A673 (cell line): ENCODE measurements at regions of chr3 and their contacts with region 1.

Region 1: DNA sequence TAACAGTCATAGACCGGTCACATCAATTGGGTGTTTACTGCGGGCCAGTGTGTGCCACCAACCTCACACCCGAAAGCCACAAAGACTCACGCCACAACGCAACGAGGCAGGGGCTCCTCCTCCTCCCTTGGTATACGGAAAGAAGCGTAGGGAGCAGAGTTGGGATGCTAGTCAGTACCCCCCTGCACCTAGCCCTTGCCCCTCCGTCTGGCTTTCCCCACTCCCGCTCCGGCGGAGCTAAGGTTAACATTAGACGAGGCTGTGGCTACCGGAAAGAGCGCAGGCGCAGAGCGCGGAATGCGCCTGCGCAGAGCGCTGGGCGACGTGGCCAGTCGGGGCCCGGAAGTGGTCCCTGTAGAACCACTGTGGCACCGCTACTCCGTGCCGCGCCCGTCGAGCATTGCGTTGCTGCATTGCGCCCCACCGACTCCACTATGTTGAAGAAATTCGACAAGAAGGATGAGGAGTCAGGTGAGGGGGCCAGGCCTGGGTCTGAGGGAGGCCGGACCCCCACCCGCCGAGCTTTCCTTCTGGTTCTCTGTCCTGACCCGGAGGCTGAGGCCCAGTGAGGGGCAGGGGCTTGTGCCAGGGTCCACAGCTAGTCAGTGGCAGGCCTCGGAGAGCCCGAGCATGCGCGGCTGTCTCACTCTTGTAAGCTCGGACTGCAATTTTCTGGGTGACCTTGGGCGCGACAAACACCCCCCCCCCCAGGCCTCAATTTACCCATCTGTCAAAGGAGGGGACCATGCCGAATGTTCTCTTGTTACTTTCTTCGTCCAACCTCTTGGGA is at the start of gene COPG1:
- DNase-seq: peak; percentile 92
- H3K4me3 ChIP-seq: peak within 1 kb of the TSS; percentile 93
- H3K27ac ChIP-seq: peak within 1 kb of the TSS; percentile 91
- H3K4me1 ChIP-seq: no peaks in the 10 kb centered on the region
- H3K27me3 ChIP-seq: no peaks in the 10 kb centered on the region
- CTCF ChIP-seq: no peak
- total RNA-seq, gene COPG1: 157 and 158 TPM in 2 replicates

Region 2: DNA sequence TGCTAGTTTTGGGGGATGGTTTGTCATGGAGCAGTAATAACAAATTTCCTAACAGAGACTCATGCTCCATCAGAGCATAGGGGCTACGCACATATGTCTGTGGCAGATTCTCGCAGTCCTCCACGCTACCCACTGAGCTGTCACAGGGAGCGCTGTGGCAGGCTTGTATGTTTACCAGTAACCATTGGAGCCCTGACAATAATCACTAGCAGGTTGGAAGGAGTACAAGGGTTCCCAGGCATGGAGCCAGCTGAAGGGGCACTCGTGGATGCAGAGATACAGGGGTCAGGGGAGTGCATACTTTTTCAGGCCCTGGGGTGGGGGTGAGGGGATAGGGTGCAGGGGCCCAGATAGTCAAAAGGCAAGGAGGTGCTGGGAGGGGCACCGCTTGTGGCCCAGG is 196.8 kb before region 1 on chr3:
- CTCF ChIA-PET with region 1: interaction called, 20 read pairs
- POLR2A ChIA-PET with region 1: interaction called, 3 read pairs
- intact Hi-C with region 1: loop called (anchors 1 kb)
- DNase-seq: no peak
- H3K4me3 ChIP-seq: no peak overlapping the region
- H3K27ac ChIP-seq: no peak overlapping the region
- H3K4me1 ChIP-seq: no peaks in the 10 kb centered on the region
- H3K27me3 ChIP-seq: no peaks in the 10 kb centered on the region
- CTCF ChIP-seq: no peak

Region 3: DNA sequence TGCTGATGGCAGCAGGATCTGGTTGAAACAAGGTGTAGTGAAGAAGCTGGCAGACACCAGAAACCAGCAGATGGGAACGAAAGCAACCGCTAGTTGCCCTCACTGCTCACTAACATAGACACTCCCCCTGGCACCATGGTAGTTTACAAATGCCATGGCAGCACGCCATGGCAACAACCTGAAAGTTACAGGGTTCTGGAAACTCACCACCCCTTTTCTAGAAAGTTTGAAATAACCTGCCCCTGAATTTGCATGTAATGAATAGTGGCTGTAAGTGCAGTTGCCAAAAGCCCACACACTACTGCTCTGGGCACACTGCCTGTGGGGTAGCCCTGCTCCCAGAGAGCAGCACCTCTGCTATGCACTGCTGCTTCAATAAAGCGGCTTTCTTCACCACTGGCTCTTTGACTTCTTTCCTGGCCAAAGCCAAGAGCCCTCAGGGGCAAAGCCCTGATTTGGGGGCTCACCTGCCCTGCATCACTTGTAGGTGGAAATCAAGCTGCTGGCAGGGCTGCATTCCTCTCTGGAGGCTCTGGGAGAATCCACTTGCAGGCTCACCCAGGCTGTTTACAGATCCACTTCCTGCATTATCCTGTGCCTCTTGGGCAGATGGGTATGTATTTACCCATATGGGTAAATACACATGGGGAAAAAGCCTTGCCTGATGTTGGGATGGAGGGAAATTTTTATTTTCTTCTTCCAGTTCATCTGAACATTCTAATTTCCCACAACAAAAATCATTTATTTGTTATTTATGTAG is 190.8 kb before region 1 on chr3:
- CTCF ChIA-PET with region 1: interaction called, 20 read pairs
- POLR2A ChIA-PET with region 1: interaction called, 3 read pairs
- intact Hi-C with region 1: loop called (anchors 1 kb)
- DNase-seq: no peak
- H3K4me3 ChIP-seq: no peak overlapping the region
- H3K27ac ChIP-seq: no peak overlapping the region
- H3K4me1 ChIP-seq: no peaks in the 10 kb centered on the region
- H3K27me3 ChIP-seq: no peaks in the 10 kb centered on the region
- CTCF ChIP-seq: no peak

Region 4: GRCh38 chr3:129183569-129184395 is 65.7 kb before region 1 on chr3 and contains the start of gene CNBP:
- CTCF ChIA-PET with region 1: no interaction called
- POLR2A ChIA-PET with region 1: interaction called, 3 read pairs
- intact Hi-C with region 1: loop called (anchors 5 kb)
- DNase-seq: peak; percentile 98
- H3K4me3 ChIP-seq: peak within 1 kb of the TSS; percentile 64
- H3K27ac ChIP-seq: peak within 1 kb of the TSS; percentile 98
- H3K4me1 ChIP-seq: peaks cover 31% of the 10 kb centered on the region
- H3K27me3 ChIP-seq: no peaks in the 10 kb centered on the region
- CTCF ChIP-seq: no peak
- total RNA-seq, gene CNBP: 396 and 438 TPM in 2 replicates